ENCODE measurements at regions of chr10 and their contacts with region 1.

Region 1: GRCh38 chr10:7121154-7121810 is 289.6 kb downstream of the SFMBT2 start:
- DNase-seq: peak; percentile 77
- H3K4me3 ChIP-seq: no peak overlapping the region; a peak in 1 of 4 replicates
- H3K27ac ChIP-seq: no peak overlapping the region
- H3K4me1 ChIP-seq: no peaks in the 10 kb centered on the region
- H3K27me3 ChIP-seq: no peaks in the 10 kb centered on the region
- CTCF ChIP-seq: peak; percentile 59
- EP300 ChIP-seq: no peak
- RAD21 ChIP-seq: peak; percentile 84

Region 2: GRCh38 chr10:6920072-6921019 is 200.9 kb before region 1 on chr10:
- CTCF ChIA-PET with region 1: interaction called, 11 read pairs
- POLR2A ChIA-PET with region 1: no interaction called
- DNase-seq: peak; percentile 71
- H3K4me3 ChIP-seq: peak overlapping the region in 1 of 2 experiments; percentile 42; a peak in 2 of 4 replicates
- H3K27ac ChIP-seq: no peak overlapping the region
- H3K4me1 ChIP-seq: peaks cover 2 to 3% of the 10 kb centered on the region in 2 experiments; a peak in 1 of 4 replicates
- H3K27me3 ChIP-seq: no peaks in the 10 kb centered on the region
- CTCF ChIP-seq: peak; percentile 69
- EP300 ChIP-seq: no peak
- RAD21 ChIP-seq: peak; percentile 82

Region 3: DNA sequence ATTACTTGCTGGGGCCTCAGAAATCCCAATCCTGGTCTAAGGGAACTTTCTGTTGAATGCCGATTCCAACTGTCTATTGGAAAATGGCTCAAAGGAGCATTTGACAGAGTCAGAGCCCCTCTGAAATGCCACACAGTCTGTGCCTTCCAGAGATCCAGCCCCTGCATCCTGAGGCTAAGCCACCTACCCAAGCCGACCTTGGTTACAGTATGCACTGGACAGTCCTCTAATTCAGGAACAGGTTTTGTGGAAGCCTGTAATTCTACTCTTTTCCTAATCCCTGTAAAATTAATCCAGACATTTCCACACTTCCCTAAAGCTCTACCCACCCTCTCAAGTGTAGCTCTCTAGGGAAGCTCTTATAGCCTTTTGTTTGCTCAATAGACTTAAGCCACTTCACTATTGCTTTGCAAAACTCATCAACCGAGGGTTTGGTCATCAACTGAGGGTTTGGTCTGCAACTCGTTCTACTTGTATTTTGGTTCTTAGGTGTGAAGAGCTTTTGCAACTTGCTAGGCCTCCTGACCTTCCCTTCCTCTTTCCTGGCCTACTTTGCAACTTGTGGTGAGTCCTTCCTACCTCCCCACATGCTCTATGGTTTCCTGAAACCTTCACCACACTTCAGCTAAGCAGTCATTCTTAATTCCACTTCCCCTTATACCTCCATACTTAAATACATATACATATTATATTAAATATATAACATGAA is 75.2 kb before region 1 on chr10:
- CTCF ChIA-PET with region 1: no interaction called
- POLR2A ChIA-PET with region 1: no interaction called
- DNase-seq: no peak
- H3K4me3 ChIP-seq: no peak overlapping the region
- H3K27ac ChIP-seq: no peak overlapping the region
- H3K4me1 ChIP-seq: no peaks in the 10 kb centered on the region
- H3K27me3 ChIP-seq: no peaks in the 10 kb centered on the region; the same call in 1 of the 2 replicates
- CTCF ChIP-seq: no peak
- EP300 ChIP-seq: no peak
- RAD21 ChIP-seq: no peak

Region 4: GRCh38 chr10:7077880-7078279 is 43.4 kb before region 1 on chr10:
- CTCF ChIA-PET with region 1: interaction called, 10 read pairs
- POLR2A ChIA-PET with region 1: no interaction called
- DNase-seq: no peak
- H3K4me3 ChIP-seq: no peak overlapping the region
- H3K27ac ChIP-seq: no peak overlapping the region
- H3K4me1 ChIP-seq: no peaks in the 10 kb centered on the region
- H3K27me3 ChIP-seq: no peaks in the 10 kb centered on the region
- CTCF ChIP-seq: no peak
- EP300 ChIP-seq: no peak
- RAD21 ChIP-seq: no peak

Region 5: DNA sequence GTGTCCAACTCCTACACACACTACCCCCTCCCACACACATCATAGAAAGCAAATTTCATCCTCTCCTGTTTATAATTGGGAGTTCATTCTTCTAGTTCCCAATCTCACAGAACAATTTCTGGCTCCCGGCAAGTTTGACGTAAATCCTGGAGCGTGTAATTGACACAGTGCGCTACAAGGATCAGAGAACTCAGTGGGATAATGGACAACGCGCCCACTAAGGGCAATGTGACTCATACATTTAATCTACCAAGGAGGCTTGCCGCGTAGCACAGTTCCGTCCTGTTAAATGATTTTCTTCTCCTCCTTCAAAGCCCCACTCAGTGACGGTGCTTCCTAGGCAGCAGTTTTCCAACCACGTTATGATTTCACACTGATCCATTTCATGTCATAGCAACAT is 12.0 kb after region 1 on chr10:
- CTCF ChIA-PET with region 1: interaction called, 27 read pairs
- POLR2A ChIA-PET with region 1: no interaction called
- DNase-seq: no peak
- H3K4me3 ChIP-seq: no peak overlapping the region
- H3K27ac ChIP-seq: no peak overlapping the region
- H3K4me1 ChIP-seq: no peaks in the 10 kb centered on the region
- H3K27me3 ChIP-seq: no peaks in the 10 kb centered on the region
- CTCF ChIP-seq: no peak
- EP300 ChIP-seq: no peak
- RAD21 ChIP-seq: no peak

Region 6: DNA sequence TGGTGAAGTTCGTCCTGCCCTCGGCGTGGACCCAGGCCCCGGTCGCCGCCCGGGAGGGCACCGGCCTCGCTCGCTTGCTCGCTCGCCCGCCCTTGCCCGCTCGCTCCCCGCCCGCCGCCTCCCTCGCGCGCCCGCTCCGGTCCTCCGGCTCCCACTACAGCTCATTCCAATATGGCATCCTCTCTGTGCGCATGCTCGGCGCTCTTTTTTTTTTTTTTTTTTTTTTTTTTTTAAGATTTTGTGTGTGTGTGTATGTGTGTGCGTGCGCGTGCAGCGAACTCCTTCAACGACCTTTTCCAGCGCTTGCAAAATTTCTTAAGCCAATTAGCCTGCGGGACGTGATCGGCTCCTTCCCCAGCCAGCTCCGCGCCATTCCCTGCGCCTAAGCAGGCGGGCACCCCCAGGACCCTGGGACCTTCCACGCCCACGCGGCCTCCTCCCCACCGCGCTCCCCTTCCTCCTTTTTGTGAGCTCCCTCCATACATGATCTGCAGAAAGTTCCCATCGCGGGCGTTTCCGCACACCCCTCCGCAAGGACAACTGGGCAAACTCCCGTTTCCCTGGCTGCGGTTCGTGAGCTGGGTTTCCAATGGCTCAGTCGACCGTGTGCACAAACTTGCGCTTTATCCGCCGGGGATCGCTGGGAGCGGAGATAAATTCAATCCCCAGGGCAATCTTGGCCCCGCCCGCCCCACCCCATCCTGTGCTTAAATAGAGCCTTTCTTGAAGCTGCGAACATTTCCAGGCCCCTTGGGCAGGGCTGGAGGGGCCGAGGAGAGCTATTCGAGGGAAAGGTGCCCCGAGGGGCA is 289.8 kb after region 1 on chr10 and contains the start of gene SFMBT2:
- CTCF ChIA-PET with region 1: interaction called, 72 read pairs
- POLR2A ChIA-PET with region 1: interaction called, 4 read pairs
- DNase-seq: peak; percentile 92
- H3K4me3 ChIP-seq: peak within 1 kb of the TSS; percentile 57 to 72
- H3K27ac ChIP-seq: peak within 1 kb of the TSS in 1 of 2 experiments; percentile 70; a peak in 2 of 4 replicates
- H3K4me1 ChIP-seq: peaks cover 0 to 15% of the 10 kb centered on the region in 2 experiments; a peak in 1 of 4 replicates
- H3K27me3 ChIP-seq: peaks cover 38% of the 10 kb centered on the region
- CTCF ChIP-seq: no peak
- EP300 ChIP-seq: no peak
- RAD21 ChIP-seq: no peak
- polyA plus RNA-seq, gene SFMBT2: 0.20 and 0.49 TPM in 2 replicates

Region 7: DNA sequence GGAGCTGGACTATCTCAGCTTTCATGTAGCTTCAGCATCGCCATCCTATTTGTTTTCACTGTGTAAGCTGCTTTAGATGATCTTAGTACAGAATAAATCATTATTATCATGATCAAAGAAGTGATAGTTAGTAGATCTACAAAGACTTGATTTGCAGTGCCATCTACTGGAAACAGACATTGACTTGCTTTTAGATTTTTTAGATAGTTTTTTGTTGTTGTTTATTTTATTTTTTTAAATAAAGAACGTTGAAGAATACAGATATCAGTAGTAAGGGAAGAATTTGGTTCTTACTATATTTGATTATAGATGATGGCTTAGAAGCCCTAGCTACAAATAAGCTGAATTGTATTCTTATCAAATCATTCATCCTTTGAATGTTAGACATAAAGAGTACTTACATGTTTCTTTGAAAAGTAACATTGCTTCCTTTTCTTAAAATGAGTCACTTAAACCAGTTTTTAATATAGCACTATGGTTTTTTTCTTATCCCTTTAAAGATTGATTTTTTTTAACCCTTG is 295.9 kb after region 1 on chr10:
- CTCF ChIA-PET with region 1: interaction called, 72 read pairs
- POLR2A ChIA-PET with region 1: no interaction called
- DNase-seq: no peak
- H3K4me3 ChIP-seq: no peak overlapping the region
- H3K27ac ChIP-seq: no peak overlapping the region
- H3K4me1 ChIP-seq: no peaks in the 10 kb centered on the region
- H3K27me3 ChIP-seq: peaks cover 8% of the 10 kb centered on the region
- CTCF ChIP-seq: peak; percentile 72
- EP300 ChIP-seq: no peak
- RAD21 ChIP-seq: peak; percentile 81